CD4-positive, alpha-beta T cell (primary cell): ENCODE measurements at regions of chr16 and their contacts with region 1.

Region 1: DNA sequence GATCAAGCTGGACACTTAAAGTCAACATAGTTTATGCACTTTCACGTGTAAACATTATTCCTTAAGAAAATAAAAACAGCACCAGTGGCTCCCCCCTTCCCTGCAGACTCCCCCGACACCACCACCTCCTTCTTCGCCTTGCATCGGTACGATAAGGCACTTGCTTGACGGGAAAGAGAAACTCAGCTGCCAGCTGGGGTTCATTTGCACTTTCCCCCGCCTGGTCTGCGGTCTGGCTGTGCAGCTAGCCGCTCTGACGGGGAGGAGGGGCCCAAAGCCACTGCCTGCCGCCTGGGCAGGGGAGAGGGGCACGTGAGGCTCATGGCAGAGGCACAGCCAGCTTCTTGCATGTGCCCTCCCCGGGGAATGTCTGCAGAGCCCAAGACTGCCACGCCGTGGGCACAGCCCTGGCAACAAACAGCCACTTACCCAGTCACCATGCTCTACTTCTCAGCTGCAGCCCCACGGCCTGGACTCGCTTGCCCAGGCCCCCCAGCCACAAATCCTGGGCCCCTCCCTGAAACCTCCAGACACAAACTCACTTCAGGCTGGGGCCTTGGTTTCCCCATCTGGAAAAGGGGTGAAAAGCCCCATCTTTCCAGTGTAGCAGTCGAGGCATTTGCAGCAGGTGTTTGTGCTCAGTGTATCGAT is 16.5 kb upstream of the PRM1 start:
- DNase-seq: peak; percentile 51 to 85 (median 65)
- ATAC-seq: peak; percentile 93
- H3K4me3 ChIP-seq: peak overlapping the region; percentile 42
- H3K4me3 Mint-ChIP-seq: peak overlapping the region; percentile 82
- H3K27ac ChIP-seq: no peak overlapping the region
- H3K27ac Mint-ChIP-seq: peak overlapping the region; percentile 73
- H3K4me1 ChIP-seq: peaks cover 24% of the 10 kb centered on the region
- H3K4me1 Mint-ChIP-seq: peaks cover 33% of the 10 kb centered on the region
- H3K27me3 ChIP-seq: peaks cover 0 to 3% of the 10 kb centered on the region in 2 experiments
- H3K27me3 Mint-ChIP-seq: no peaks in the 10 kb centered on the region
- CTCF ChIP-seq: peak; percentile 39

Region 2: DNA sequence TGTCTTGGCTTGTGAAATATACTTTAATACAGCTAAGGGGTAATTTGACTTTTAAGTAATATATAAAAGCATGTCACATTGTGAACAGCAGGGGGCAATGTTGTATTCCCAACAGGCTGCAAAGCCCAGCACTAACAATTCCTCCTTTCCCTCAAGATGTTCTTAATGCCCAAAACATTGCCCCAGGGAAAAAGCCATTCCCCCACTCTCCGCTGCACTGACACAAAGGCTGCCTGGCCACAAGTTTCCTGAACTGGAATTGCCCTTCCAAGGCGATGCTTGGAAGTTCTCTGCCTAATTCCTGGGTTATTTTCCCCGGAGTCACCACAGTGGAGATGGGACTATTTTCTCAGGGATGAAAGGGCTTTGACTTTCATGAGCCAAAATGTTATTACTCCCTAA is 326.1 kb before region 1 on chr16:
- CTCF ChIA-PET with region 1: interaction called, 3 read pairs
- POLR2A ChIA-PET with region 1: no interaction called
- intact Hi-C with region 1: loop called (anchors 1 to 2 kb)
- DNase-seq: peak in 8 of 14 experiments; percentile 11 to 78 (median 44)
- ATAC-seq: peak; percentile 34
- H3K4me3 ChIP-seq: no peak overlapping the region
- H3K4me3 Mint-ChIP-seq: no peak overlapping the region
- H3K27ac ChIP-seq: no peak overlapping the region
- H3K27ac Mint-ChIP-seq: no peak overlapping the region
- H3K4me1 ChIP-seq: peaks cover 10% of the 10 kb centered on the region
- H3K4me1 Mint-ChIP-seq: peaks cover 21% of the 10 kb centered on the region
- H3K27me3 ChIP-seq: no peaks in the 10 kb centered on the region
- H3K27me3 Mint-ChIP-seq: no peaks in the 10 kb centered on the region
- CTCF ChIP-seq: peak; percentile 76

Region 3: DNA sequence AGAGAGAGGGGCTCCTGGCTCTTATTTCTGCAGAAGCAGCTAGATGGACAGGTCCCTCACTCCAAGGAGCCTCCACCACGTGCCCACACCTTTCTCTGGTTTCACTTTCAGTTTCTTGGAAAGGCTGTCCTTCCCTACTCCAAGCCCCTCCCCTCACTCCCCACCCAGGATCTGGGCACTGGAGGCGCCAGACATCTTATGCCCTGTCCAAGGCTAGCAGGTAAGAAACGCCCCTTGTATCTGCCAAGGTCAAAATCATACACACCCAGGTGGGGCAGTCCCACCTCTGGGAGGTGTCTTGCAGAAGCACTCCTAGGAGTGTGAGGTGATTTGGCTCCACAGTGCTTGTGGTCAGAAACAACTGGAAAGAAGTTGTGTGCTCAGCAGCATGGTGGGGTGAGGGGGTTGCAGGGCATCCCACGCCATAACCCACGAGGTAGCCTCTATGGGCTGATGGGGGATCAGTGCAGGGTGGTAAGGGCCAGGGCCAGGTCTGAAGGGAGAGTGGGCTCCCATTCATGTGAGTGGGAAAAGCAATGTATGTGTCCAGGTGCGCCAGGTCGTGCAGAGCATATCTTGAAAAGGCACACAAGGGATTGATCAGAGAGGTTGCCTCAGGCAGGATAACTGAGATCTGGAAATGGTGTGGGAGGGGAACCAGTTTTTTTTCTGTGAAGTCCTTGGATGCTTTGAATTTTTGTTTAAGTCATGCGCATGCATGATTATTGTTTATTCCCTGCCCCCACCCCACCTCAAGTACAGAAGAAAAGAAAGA is 15.3 kb after region 1 on chr16:
- CTCF ChIA-PET with region 1: no interaction called
- POLR2A ChIA-PET with region 1: interaction called, 29 read pairs
- intact Hi-C with region 1: no loop called
- DNase-seq: peak in 4 of 14 experiments; percentile 27 to 73 (median 37)
- ATAC-seq: peak; percentile 31
- H3K4me3 ChIP-seq: no peak overlapping the region
- H3K4me3 Mint-ChIP-seq: no peak overlapping the region
- H3K27ac ChIP-seq: no peak overlapping the region
- H3K27ac Mint-ChIP-seq: peak overlapping the region; percentile 81
- H3K4me1 ChIP-seq: peaks cover 38% of the 10 kb centered on the region
- H3K4me1 Mint-ChIP-seq: peaks cover 39% of the 10 kb centered on the region
- H3K27me3 ChIP-seq: no peaks in the 10 kb centered on the region
- H3K27me3 Mint-ChIP-seq: no peaks in the 10 kb centered on the region
- CTCF ChIP-seq: no peak